OCI-LY7 (cell line): ENCODE measurements at regions of chr4 and their contacts with region 1.

Region 1: DNA sequence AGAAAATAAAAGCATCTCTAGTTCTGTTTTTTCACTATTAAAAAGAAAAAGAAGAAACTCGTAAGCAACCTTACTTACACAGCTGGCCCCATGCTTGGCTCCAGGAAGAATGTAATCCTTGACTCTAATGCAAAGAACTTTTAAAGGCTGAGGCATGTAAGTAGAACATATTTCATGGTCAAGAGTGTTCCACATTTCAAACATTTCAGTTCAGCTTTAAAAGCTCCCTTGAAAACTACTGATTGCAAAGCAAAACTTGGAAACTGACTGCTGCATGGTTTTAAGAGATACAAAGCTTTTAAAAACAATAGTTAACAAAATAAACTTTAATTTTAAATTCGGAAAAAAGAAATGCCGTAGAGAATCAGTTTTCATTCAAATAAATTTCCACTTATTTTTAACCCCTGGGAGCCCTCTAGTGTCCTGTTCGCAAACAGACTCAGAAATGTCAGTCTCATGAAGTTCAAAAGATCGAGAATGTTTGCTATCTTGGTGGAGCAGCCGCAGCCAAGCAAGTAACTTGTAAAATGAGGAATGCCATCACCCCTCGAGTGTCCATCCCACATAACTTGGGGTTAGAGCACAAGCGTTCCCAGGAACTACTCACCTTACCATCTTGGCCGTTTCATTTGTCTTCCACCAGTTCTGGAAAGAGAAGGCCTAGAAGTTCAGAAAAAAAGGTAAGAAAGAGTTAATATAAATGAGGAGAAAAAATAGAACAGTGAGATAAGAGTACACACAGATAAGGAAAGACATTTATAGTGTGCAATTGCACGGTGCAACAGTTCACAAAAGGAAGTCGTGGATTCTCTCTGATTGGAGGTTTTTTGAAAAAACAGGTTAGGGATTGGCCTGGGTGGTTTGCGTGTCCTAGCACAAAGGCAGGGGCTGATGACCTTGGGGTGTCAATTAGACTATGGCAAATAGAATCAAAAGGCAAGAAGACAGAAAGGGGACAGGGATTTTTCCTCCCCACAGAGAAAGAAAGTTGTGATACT is at the start of gene GASK1B:
- DNase-seq: peak; percentile 29
- H3K4me3 ChIP-seq: no peak within 1 kb of the TSS
- H3K27ac ChIP-seq: no peak within 1 kb of the TSS
- H3K4me1 ChIP-seq: no peaks in the 10 kb centered on the region
- CTCF ChIP-seq: peak; percentile 78
- total RNA-seq, gene GASK1B: 0.25 and 0.33 TPM in 2 replicates

Region 2: GRCh38 chr4:157992038-157992705 is 180.4 kb before region 1 on chr4:
- CTCF ChIA-PET with region 1: no interaction called
- POLR2A ChIA-PET with region 1: interaction called, 8 read pairs
- intact Hi-C with region 1: loop called (anchors 1 kb)
- DNase-seq: peak; percentile 38
- H3K4me3 ChIP-seq: no peak overlapping the region
- H3K27ac ChIP-seq: no peak overlapping the region
- H3K4me1 ChIP-seq: no peaks in the 10 kb centered on the region
- CTCF ChIP-seq: peak; percentile 85

Region 3: GRCh38 chr4:158209825-158210807 is 37.6 kb after region 1 on chr4 and contains the start of gene TMEM144:
- CTCF ChIA-PET with region 1: no interaction called
- POLR2A ChIA-PET with region 1: no interaction called
- intact Hi-C with region 1: no loop called
- DNase-seq: no peak
- H3K4me3 ChIP-seq: no peak within 1 kb of the TSS
- H3K27ac ChIP-seq: no peak within 1 kb of the TSS
- H3K4me1 ChIP-seq: no peaks in the 10 kb centered on the region
- CTCF ChIP-seq: no peak
- total RNA-seq, gene TMEM144: not detected in 2 replicates